GM10248 (cell line): ENCODE measurements at regions of chr4 and their contacts with region 1.

Region 1: GRCh38 chr4:16431866-16432265 is 205.6 kb upstream of the TAPT1 start:
- DNase-seq: no peak
- CTCF ChIP-seq: no peak

Region 2: GRCh38 chr4:16443504-16444088 is 11.7 kb after region 1 on chr4:
- CTCF ChIA-PET with region 1: interaction called, 10 read pairs
- POLR2A ChIA-PET with region 1: no interaction called
- DNase-seq: peak; percentile 31
- CTCF ChIP-seq: peak; percentile 54

Region 3: GRCh38 chr4:16480011-16480410 is 48.1 kb after region 1 on chr4:
- CTCF ChIA-PET with region 1: no interaction called
- POLR2A ChIA-PET with region 1: no interaction called
- DNase-seq: no peak
- CTCF ChIP-seq: no peak

Region 4: GRCh38 chr4:16969696-16970135 is 537.9 kb after region 1 on chr4:
- CTCF ChIA-PET with region 1: no interaction called
- POLR2A ChIA-PET with region 1: no interaction called
- DNase-seq: no peak
- CTCF ChIP-seq: no peak